Mammary epithelial cell (primary cell): ENCODE measurements at regions of chr17 and their contacts with region 1.

Region 1: DNA sequence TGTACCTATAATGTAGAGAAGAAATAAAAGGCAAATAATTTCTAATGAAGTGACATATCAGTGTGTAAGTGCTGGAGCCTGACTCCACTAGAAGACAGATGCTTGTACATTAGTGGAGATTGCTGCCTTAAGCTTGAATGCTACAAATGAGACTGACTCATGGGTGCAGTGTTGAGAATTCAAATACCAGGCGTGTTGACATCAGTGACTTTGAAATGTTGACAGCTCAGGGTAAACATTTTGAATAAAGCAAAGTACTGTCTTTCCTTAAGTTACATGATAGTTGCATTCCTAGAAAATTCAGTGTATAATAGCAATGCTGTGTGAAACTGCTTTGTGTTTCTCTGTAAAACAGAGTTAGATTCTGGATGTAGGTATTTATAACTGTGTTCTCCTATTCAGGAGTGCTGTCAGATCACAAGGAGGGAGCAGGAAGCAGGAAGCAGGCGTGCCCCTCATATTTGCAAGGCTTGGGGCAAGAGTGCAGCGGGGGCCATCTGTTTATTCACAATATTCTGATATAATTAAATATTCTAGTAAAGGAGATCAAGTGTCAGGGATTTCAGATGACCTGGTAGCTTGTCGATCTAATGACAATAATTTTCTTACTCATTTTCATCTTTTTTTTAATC is 119.0 kb downstream of the SPECC1 start:
- DNase-seq: peak; percentile 9
- H3K4me3 ChIP-seq: no peak overlapping the region
- H3K27ac ChIP-seq: no peak overlapping the region
- H3K4me1 ChIP-seq: no peaks in the 10 kb centered on the region
- H3K27me3 ChIP-seq: no peaks in the 10 kb centered on the region
- CTCF ChIP-seq: no peak

Region 2: DNA sequence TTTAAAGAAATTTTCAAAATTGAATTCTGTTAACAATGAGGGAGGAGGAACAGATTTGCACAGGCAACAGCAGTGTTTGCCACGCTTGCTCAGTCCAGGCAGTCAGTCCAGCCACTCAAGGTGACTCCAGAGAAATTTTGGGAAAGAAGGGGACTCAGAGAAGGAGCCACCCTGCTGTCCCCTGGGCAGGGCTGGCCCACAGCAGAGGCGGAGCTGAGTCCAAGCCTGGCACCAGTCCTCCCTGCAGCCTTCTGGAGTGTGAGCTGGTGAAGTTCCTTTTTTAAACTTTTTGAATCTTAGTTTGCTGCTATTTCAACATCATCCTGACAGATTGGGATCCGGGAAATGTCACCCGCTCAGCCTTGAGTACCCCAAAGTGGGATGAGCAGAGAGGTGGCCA is 397.3 kb before region 1 on chr17:
- CTCF ChIA-PET with region 1: no interaction called
- dilution Hi-C with region 1: no loop called
- in situ Hi-C with region 1: no loop called
- intact Hi-C with region 1: no loop called
- DNase-seq: no peak
- H3K4me3 ChIP-seq: no peak overlapping the region
- H3K27ac ChIP-seq: no peak overlapping the region
- H3K4me1 ChIP-seq: peaks cover 20% of the 10 kb centered on the region
- H3K27me3 ChIP-seq: no peaks in the 10 kb centered on the region
- CTCF ChIP-seq: no peak

Region 3: GRCh38 chr17:19986941-19987861 is 141.0 kb before region 1 on chr17:
- CTCF ChIA-PET with region 1: no interaction called
- dilution Hi-C with region 1: loop called (anchors 5 kb)
- in situ Hi-C with region 1: no loop called
- intact Hi-C with region 1: no loop called
- DNase-seq: peak; percentile 35
- H3K4me3 ChIP-seq: no peak overlapping the region
- H3K27ac ChIP-seq: no peak overlapping the region
- H3K4me1 ChIP-seq: peaks cover 5% of the 10 kb centered on the region
- H3K27me3 ChIP-seq: no peaks in the 10 kb centered on the region
- CTCF ChIP-seq: no peak